ENCODE measurements at regions of chr6 and their contacts with region 1.

Region 1: GRCh38 chr6:53524455-53524815 is 20.5 kb downstream of the GCLC start:
- H3K4me3 ChIP-seq: no peak overlapping the region
- H3K27ac ChIP-seq: no peak overlapping the region
- H3K4me1 ChIP-seq: peaks cover 35% of the 10 kb centered on the region
- CTCF ChIP-seq: no peak

Region 2: GRCh38 chr6:53544470-53545308 is 20.3 kb after region 1 on chr6 and contains the start of gene GCLC:
- CTCF ChIA-PET with region 1: interaction called, 13 read pairs
- POLR2A ChIA-PET with region 1: interaction called, 8 read pairs
- H3K4me3 ChIP-seq: peak within 1 kb of the TSS; percentile 91
- H3K27ac ChIP-seq: peak within 1 kb of the TSS; percentile 80
- H3K4me1 ChIP-seq: peaks cover 10% of the 10 kb centered on the region; the same call in 1 of the 2 replicates
- CTCF ChIP-seq: peak; percentile 87